T-cell (primary cell): ENCODE measurements at regions of chr11 and their contacts with region 1.

Region 1: DNA sequence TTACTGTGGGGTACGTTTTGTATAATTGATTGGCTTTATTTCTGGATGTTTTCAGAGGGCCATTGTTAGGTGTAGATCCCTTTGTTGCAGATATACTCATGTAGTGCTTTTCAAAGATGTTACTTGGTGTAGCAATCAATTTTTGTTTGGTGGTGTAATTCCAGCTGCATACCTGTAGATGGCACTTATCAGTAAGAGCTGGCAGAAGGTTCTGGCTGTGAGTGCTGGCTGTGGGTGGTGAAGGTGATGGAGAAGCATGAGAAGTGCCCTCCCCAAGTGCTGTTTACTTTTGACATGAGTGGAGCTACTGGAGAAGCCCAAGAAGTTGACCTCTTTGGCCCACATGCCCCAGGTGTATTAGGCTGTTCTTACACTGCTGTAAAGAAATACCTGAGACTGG is 1074.9 kb downstream of the FAM181B start:
- DNase-seq: peak in 1 of 35 experiments; percentile 6
- ATAC-seq: no peak
- H3K4me3 ChIP-seq: no peak overlapping the region
- H3K4me3 Mint-ChIP-seq: no peak overlapping the region
- H3K27ac ChIP-seq: no peak overlapping the region
- H3K27ac Mint-ChIP-seq: no peak overlapping the region
- H3K4me1 ChIP-seq: no peaks in the 10 kb centered on the region
- H3K4me1 Mint-ChIP-seq: no peaks in the 10 kb centered on the region
- H3K27me3 ChIP-seq: peaks cover 0 to 5% of the 10 kb centered on the region in 2 experiments
- H3K27me3 Mint-ChIP-seq: peaks cover 22 to 30% of the 10 kb centered on the region in 2 donors

Region 2: GRCh38 chr11:81255895-81256294 is 402.8 kb before region 1 on chr11:
- CTCF ChIA-PET with region 1: no interaction called
- POLR2A ChIA-PET with region 1: no interaction called
- DNase-seq: no peak
- ATAC-seq: no peak
- H3K4me3 ChIP-seq: no peak overlapping the region
- H3K4me3 Mint-ChIP-seq: no peak overlapping the region
- H3K27ac ChIP-seq: no peak overlapping the region
- H3K27ac Mint-ChIP-seq: no peak overlapping the region
- H3K4me1 ChIP-seq: no peaks in the 10 kb centered on the region
- H3K4me1 Mint-ChIP-seq: no peaks in the 10 kb centered on the region
- H3K27me3 ChIP-seq: no peaks in the 10 kb centered on the region
- H3K27me3 Mint-ChIP-seq: no peaks in the 10 kb centered on the region

Region 3: GRCh38 chr11:82653752-82654151 is 995.0 kb after region 1 on chr11:
- CTCF ChIA-PET with region 1: no interaction called
- POLR2A ChIA-PET with region 1: interaction called in 1 of 2 experiments, 10 read pairs
- DNase-seq: no peak
- ATAC-seq: no peak
- H3K4me3 ChIP-seq: no peak overlapping the region
- H3K4me3 Mint-ChIP-seq: no peak overlapping the region
- H3K27ac ChIP-seq: no peak overlapping the region
- H3K27ac Mint-ChIP-seq: no peak overlapping the region
- H3K4me1 ChIP-seq: no peaks in the 10 kb centered on the region
- H3K4me1 Mint-ChIP-seq: no peaks in the 10 kb centered on the region
- H3K27me3 ChIP-seq: no peaks in the 10 kb centered on the region
- H3K27me3 Mint-ChIP-seq: peaks cover 10 to 32% of the 10 kb centered on the region in 2 donors